ENCODE measurements at regions of chr12 and their contacts with region 1.

Region 1: DNA sequence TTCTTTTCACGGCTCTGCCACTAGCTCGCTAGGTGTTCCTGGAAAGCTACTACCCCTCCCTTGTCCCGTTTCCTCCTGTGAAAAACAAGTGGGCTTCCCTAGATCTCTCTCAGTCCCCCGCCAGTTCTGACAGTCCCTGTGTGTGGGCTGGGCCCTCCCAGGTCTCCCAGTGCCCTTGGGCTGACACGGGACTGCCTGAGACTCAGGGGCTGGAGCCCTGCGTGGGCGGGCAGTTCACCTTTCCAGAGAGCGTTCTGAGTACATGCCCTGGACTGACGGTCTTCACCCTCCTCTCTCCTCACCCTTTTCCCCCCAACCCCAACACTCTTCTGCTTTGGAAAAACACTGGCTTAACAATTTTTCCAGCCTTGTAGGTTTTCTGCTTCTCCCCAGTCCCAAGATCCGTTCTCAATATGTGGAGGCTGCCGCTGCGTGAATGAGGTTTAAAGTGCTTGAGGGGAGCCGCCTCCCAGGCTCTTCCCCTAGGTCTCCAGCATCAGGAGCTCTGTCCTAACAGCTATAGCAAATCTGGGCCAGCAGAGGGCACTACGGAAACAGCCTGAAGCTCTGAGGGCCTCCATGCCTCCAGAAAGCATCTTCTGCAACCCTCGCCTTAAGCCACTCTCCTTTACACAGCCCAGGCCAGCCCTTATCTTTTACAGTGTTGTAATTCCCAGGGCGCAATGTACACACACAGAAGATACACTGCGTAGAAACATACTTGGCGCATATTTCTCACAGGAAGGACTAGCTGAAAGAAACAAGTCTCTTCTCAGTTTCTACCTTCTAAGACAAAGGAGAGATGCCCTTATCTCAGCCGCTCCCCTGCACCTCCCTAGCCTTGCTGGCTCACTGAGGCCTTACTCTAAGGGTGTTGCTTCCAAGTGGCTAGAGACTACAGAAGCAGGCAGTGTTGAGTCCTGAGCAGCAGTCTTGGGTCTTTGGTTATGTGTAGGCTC is 10.4 kb upstream of the DCD start:
- DNase-seq: no peak
- ATAC-seq: peak; percentile 93
- H3K4me3 ChIP-seq: no peak overlapping the region
- H3K27ac ChIP-seq: no peak overlapping the region
- H3K4me1 ChIP-seq: no peaks in the 10 kb centered on the region
- H3K27me3 ChIP-seq: peaks cover 0 to 2% of the 10 kb centered on the region in 2 experiments; a peak in 2 of 4 replicates
- CTCF ChIP-seq: peak; percentile 68 to 81 (median 70)
- EP300 ChIP-seq: no peak
- POLR2A ChIP-seq: no peak
- RAD21 ChIP-seq: peak; percentile 51

Region 2: DNA sequence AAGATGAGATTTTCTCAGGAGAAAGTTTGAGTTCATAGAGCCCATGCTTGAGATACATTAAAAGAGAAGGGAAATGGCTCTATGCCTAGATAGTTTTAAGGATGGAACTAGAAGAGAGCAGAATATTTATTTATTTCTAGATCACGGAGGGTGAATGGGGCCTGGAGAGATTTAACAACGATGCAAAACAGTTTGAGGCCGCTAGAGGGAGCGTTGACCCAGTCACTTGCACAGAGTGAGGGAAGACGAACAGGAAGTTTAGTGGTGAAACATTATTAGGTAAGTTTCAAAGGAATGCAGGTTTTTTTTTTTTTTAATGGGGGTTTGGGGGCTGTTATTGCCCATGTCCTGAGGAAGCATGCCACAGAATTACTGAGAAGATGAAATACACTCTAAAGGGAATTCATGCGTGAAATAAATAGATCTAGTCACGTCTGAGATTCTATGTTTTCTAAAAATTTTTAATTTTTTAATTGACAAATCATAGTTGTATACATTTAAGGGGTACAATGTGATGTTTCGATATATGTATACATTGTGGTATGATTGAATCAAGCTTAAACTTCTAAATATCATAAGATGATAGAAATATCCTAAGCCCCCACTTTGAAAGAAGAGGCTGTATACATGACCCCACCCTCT is 55.3 kb before region 1 on chr12:
- CTCF ChIA-PET with region 1: interaction called, 17 read pairs
- POLR2A ChIA-PET with region 1: no interaction called
- RAD21 ChIA-PET with region 1: no interaction called
- SMC1A ChIA-PET with region 1: no interaction called
- in situ Hi-C with region 1: no loop called
- intact Hi-C with region 1: no loop called
- DNase-seq: peak; percentile 21
- ATAC-seq: peak; percentile 99
- H3K4me3 ChIP-seq: no peak overlapping the region
- H3K27ac ChIP-seq: no peak overlapping the region
- H3K4me1 ChIP-seq: no peaks in the 10 kb centered on the region
- H3K27me3 ChIP-seq: no peaks in the 10 kb centered on the region; a peak in 1 of 4 replicates
- CTCF ChIP-seq: peak; percentile 81 to 92 (median 84)
- EP300 ChIP-seq: no peak
- POLR2A ChIP-seq: no peak
- RAD21 ChIP-seq: peak; percentile 78